ENCODE measurements at regions of chr19 and their contacts with region 1.

Region 1: DNA sequence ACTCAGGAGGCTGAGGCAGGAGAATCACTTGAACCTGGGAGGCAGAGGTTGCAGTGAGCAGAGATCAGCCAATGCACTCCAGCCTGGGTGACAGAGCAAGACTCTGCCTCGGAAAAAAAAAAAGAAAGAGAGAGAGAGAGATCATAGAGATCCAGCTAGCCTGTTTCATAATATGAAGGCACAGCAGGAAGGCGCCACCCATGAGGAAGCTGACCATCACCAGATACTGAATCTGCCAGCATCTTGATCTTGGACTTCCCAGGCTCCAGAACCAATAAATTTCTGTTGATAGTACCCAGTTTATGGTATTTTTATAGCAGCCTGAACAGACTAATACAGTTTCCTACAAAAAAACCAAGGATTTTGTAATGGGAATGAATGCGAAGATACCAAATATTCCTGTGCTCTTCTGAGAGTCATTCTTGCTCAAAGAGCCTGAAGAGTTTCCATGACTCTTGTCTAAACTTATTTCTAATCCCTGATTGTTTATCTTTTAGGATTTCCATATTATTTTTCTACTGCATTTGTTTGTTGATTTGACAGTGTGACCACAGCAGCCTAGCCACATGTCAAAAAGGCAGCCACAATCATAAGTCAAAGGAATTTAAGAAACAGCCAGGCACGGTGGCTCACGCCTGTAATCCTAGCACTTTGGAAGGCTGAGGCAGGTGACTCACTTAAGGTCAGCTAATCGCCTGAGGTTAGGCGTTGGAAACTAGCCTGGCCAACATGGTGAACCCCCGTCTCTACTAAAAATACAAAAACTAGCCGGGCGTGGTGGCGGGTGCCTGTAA is 37.7 kb upstream of the PDCD5 start:
- H3K4me3 ChIP-seq: no peak overlapping the region
- H3K27ac ChIP-seq: no peak overlapping the region
- H3K4me1 ChIP-seq: peaks cover 8% of the 10 kb centered on the region
- CTCF ChIP-seq: no peak

Region 2: GRCh38 chr19:32324631-32325285 is 218.5 kb before region 1 on chr19:
- CTCF ChIA-PET with region 1: no interaction called
- POLR2A ChIA-PET with region 1: interaction called, 12 read pairs
- H3K4me3 ChIP-seq: no peak overlapping the region
- H3K27ac ChIP-seq: no peak overlapping the region
- H3K4me1 ChIP-seq: peaks cover 5% of the 10 kb centered on the region; the same call in 1 of the 2 replicates
- CTCF ChIP-seq: peak; percentile 76

Region 3: DNA sequence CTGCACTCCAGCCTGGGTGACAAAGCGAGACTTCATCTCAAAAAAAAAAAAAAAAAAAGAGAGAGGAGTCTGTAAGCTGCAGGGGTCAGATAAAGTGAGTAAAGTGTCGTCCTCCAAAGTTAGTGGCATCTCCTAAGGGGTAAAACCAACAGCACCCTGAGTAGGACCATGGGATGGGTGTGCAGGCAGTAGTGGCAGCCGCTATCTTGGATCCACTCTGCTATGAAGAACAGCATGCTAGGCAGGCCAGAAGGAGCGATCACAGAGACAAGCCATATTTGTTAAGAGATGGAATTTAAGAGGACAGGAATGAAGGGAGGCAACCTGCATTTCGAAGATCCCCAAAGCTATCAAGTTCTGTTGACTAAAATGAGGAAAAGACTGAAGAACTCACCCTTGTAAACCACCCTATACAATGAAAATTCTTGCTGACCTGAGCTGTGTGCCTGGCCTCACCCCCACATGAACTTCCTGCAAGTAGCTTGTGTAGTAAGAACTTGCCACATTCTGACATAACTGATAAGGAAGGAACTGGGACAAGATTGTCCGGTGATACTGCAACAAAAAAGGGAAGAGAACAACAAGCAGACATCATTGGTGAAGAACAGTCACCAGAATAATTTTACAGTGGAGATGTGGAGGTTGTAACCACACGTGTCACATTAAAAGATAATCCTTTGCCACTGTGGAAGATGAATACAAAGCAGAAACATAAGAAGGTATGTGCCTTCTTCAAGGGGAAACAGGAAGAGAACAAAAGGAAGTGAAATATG is 121.5 kb before region 1 on chr19:
- CTCF ChIA-PET with region 1: no interaction called
- POLR2A ChIA-PET with region 1: no interaction called
- H3K4me3 ChIP-seq: no peak overlapping the region
- H3K27ac ChIP-seq: no peak overlapping the region
- H3K4me1 ChIP-seq: no peaks in the 10 kb centered on the region
- CTCF ChIP-seq: no peak

Region 4: GRCh38 chr19:32558607-32559228 is 15.4 kb after region 1 on chr19:
- CTCF ChIA-PET with region 1: no interaction called
- POLR2A ChIA-PET with region 1: no interaction called
- H3K4me3 ChIP-seq: no peak overlapping the region
- H3K27ac ChIP-seq: no peak overlapping the region
- H3K4me1 ChIP-seq: no peaks in the 10 kb centered on the region
- CTCF ChIP-seq: no peak

Region 5: GRCh38 chr19:32881766-32882165 is 338.5 kb after region 1 on chr19:
- CTCF ChIA-PET with region 1: no interaction called
- POLR2A ChIA-PET with region 1: no interaction called
- H3K4me3 ChIP-seq: no peak overlapping the region
- H3K27ac ChIP-seq: no peak overlapping the region
- H3K4me1 ChIP-seq: peaks cover 8% of the 10 kb centered on the region
- CTCF ChIP-seq: no peak